Lower leg skin (tissue), 4 donors: ENCODE measurements at regions of chr3 and their contacts with region 1.

Region 1: GRCh38 chr3:132535575-132536441 is 61.3 kb upstream of the ACKR4 start:
- DNase-seq: peak; percentile 74 to 89
- H3K4me3 ChIP-seq: no peak overlapping the region
- CTCF ChIP-seq: no peak
- POLR2A ChIP-seq: no peak

Region 2: GRCh38 chr3:132641837-132642538 is 106.2 kb after region 1 on chr3:
- intact Hi-C with region 1: loop called (anchors 5 kb)
- DNase-seq: no peak
- H3K4me3 ChIP-seq: no peak overlapping the region
- CTCF ChIP-seq: peak in 1 of 3 donors; percentile 43
- POLR2A ChIP-seq: no peak

Region 3: DNA sequence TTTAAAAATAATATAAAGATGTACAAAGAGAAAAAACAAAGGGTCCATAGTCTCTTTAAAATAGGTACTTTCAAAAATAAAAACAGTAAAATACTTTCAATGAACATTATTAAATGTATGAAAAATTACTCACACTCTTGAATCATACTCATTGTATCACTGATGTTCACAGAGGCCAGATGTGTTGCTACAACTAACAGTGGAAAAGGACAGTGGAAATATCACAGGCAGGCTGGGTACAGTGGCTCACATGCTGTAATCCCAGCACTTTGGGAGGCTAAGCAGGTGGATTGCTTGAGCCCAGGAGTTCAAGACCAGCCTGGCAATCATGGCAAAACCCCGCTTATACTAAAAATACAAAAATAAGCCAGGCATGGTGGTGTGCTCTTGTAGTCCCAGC is 159.6 kb after region 1 on chr3:
- intact Hi-C with region 1: no loop called
- DNase-seq: no peak
- H3K4me3 ChIP-seq: no peak overlapping the region
- CTCF ChIP-seq: no peak
- POLR2A ChIP-seq: no peak